B cell (primary cell): ENCODE measurements at regions of chr2 and their contacts with region 1.

Region 1: GRCh38 chr2:237674731-237675276 is 47.4 kb downstream of the LRRFIP1 start:
- DNase-seq: peak; percentile 97
- ATAC-seq: peak; percentile 78
- H3K4me3 ChIP-seq: peak overlapping the region; percentile 38 to 72 (median 54)
- H3K4me3 Mint-ChIP-seq: peak overlapping the region; percentile 92
- H3K27ac ChIP-seq: peak overlapping the region; percentile 97 to 99
- H3K27ac Mint-ChIP-seq: peak overlapping the region; percentile 96
- H3K4me1 ChIP-seq: peaks cover 75 to 88% of the 10 kb centered on the region in 2 donors
- H3K4me1 Mint-ChIP-seq: peaks cover 84% of the 10 kb centered on the region
- H3K27me3 ChIP-seq: no peaks in the 10 kb centered on the region
- H3K27me3 Mint-ChIP-seq: no peaks in the 10 kb centered on the region
- CTCF ChIP-seq: no peak

Region 2: DNA sequence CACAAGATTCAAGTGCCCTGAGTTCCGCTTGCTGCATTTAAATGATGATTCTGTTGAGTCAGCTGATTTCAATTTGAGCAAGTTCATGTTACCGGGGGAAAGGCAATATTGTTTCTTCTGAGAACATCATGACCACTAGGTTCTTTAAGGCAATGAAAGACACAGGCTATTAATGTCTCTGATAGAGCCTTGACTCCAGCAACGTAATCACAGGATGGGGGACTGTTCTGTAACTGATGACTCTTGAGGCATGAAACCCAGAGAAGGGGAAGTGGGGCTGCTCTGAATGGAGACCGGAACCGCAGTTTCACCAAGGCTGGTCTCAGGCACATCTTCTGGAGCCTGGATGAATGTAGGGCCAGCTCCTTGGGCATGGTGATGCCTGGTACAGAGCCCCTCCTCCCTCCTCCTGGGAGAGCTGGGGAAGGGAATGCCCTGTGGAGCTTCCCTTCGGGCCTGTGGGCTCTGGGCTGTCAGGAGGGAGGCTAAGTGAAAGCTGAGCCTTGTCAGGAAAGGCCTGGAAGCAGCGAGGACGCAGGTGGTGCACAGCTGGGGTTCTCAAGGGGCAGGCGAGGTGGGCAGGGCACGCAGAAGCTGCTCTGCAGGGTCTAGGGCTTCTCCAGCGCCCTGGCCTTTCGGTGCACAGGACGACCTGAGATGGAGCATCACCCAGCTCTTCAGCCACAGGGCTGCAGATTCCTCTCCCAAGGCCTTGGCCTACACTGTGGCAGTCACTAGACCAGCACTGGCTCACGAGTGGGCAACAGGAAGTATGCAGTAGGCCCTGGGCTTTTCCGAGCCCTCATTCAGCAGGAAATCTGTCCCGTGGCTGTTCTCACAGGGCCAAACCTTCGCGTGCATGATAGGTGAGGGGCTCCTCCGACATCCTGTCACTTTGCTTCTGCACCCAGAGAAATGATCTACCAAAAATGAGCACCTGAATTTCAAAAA is 145.1 kb before region 1 on chr2:
- CTCF ChIA-PET with region 1: no interaction called
- POLR2A ChIA-PET with region 1: no interaction called
- intact Hi-C with region 1: no loop called
- DNase-seq: peak; percentile 44
- ATAC-seq: peak; percentile 41
- H3K4me3 ChIP-seq: peak overlapping the region in 1 of 5 experiments; percentile 17
- H3K4me3 Mint-ChIP-seq: peak overlapping the region; percentile 32
- H3K27ac ChIP-seq: no peak overlapping the region
- H3K27ac Mint-ChIP-seq: no peak overlapping the region
- H3K4me1 ChIP-seq: peaks cover 0 to 9% of the 10 kb centered on the region in 2 donors
- H3K4me1 Mint-ChIP-seq: peaks cover 5% of the 10 kb centered on the region
- H3K27me3 ChIP-seq: no peaks in the 10 kb centered on the region
- H3K27me3 Mint-ChIP-seq: no peaks in the 10 kb centered on the region
- CTCF ChIP-seq: no peak

Region 3: DNA sequence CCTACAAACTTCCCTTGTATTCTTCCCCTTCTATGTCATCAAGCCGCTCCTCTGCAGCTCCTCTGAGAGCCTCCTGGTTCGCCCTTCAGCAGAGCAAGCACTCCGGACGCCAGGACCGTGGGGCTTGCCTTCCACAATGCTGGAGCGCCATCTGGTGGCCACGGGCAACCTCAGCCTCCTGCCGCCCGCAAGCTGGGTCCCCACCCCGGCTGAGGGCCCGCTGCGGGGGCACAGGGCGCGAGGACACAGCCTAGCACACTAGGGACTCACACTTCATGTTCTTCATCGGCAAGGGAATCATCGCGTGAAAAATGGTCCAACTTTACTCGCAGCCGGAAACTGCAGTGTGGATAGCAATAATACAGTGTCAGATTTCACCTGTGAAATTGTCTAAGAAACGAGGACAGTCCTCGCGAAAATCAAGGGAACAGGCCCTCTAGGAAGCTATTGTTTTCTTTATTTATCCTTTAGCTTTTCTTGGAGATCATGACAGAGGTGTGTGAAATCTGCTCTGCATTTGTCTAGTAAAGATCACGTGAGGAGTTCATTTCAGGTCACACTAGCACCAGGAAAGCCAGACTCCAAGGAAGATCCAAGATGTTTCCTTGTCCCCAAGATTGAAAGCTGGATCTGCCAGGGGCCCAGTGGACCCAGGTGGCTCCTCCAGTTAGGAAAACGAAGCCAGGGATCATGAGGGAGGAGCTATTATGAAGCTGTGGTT is 102.6 kb before region 1 on chr2:
- CTCF ChIA-PET with region 1: interaction called, 19 read pairs
- POLR2A ChIA-PET with region 1: no interaction called
- intact Hi-C with region 1: no loop called
- DNase-seq: peak; percentile 87
- ATAC-seq: peak; percentile 93
- H3K4me3 ChIP-seq: no peak overlapping the region
- H3K4me3 Mint-ChIP-seq: no peak overlapping the region
- H3K27ac ChIP-seq: no peak overlapping the region
- H3K27ac Mint-ChIP-seq: no peak overlapping the region
- H3K4me1 ChIP-seq: peaks cover 0 to 7% of the 10 kb centered on the region in 2 donors
- H3K4me1 Mint-ChIP-seq: peaks cover 6% of the 10 kb centered on the region
- H3K27me3 ChIP-seq: peaks cover 0 to 14% (median 2%) of the 10 kb centered on the region in 4 experiments
- H3K27me3 Mint-ChIP-seq: peaks cover 36% of the 10 kb centered on the region
- CTCF ChIP-seq: peak; percentile 98

Region 4: DNA sequence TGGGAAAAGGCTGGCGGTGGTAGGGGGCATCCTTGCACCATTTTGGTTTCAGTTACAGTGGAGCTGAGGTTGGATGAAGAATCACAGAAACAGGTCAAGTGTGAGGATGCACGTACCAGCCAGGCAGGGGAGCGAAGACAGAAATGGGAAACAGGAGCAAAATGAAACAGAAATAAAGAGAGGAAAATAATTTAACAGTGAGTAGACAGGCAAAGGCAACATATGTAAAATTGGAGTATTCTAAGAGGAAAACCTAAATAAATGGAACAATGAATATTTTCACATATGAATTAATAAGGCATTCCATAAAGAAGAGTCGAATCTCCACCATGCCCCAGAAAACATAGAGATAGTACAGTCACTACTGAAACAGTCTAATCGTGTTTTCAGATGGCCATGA is 17.7 kb before region 1 on chr2:
- CTCF ChIA-PET with region 1: interaction called, 4 read pairs
- POLR2A ChIA-PET with region 1: no interaction called
- intact Hi-C with region 1: loop called (anchors 2 kb)
- DNase-seq: no peak
- ATAC-seq: no peak
- H3K4me3 ChIP-seq: no peak overlapping the region
- H3K4me3 Mint-ChIP-seq: no peak overlapping the region
- H3K27ac ChIP-seq: no peak overlapping the region
- H3K27ac Mint-ChIP-seq: no peak overlapping the region
- H3K4me1 ChIP-seq: peaks cover 7 to 16% of the 10 kb centered on the region in 2 donors
- H3K4me1 Mint-ChIP-seq: peaks cover 30% of the 10 kb centered on the region
- H3K27me3 ChIP-seq: peaks cover 0 to 3% (median 1%) of the 10 kb centered on the region in 4 experiments
- H3K27me3 Mint-ChIP-seq: peaks cover 22% of the 10 kb centered on the region
- CTCF ChIP-seq: no peak

Region 5: GRCh38 chr2:237691908-237692600 is 17.2 kb after region 1 on chr2:
- CTCF ChIA-PET with region 1: interaction called, 350 read pairs
- POLR2A ChIA-PET with region 1: interaction called, 154 read pairs
- intact Hi-C with region 1: loop called (anchors 1 kb)
- DNase-seq: peak; percentile 94
- ATAC-seq: peak; percentile 66
- H3K4me3 ChIP-seq: peak overlapping the region; percentile 87 to 94 (median 92)
- H3K4me3 Mint-ChIP-seq: peak overlapping the region; percentile 91
- H3K27ac ChIP-seq: peak overlapping the region; percentile 94 to 95
- H3K27ac Mint-ChIP-seq: peak overlapping the region; percentile 87
- H3K4me1 ChIP-seq: peaks cover 70 to 79% of the 10 kb centered on the region in 2 donors
- H3K4me1 Mint-ChIP-seq: peaks cover 78% of the 10 kb centered on the region
- H3K27me3 ChIP-seq: no peaks in the 10 kb centered on the region
- H3K27me3 Mint-ChIP-seq: no peaks in the 10 kb centered on the region
- CTCF ChIP-seq: no peak

Region 6: GRCh38 chr2:237714690-237715458 is 40.1 kb after region 1 on chr2:
- CTCF ChIA-PET with region 1: interaction called, 24 read pairs
- POLR2A ChIA-PET with region 1: interaction called, 3 read pairs
- intact Hi-C with region 1: no loop called
- DNase-seq: no peak
- ATAC-seq: no peak
- H3K4me3 ChIP-seq: no peak overlapping the region
- H3K4me3 Mint-ChIP-seq: no peak overlapping the region
- H3K27ac ChIP-seq: peak overlapping the region in 1 of 2 donors; percentile 11
- H3K27ac Mint-ChIP-seq: peak overlapping the region; percentile 57
- H3K4me1 ChIP-seq: peaks cover 7 to 9% of the 10 kb centered on the region in 2 donors
- H3K4me1 Mint-ChIP-seq: peaks cover 43% of the 10 kb centered on the region
- H3K27me3 ChIP-seq: no peaks in the 10 kb centered on the region
- H3K27me3 Mint-ChIP-seq: no peaks in the 10 kb centered on the region
- CTCF ChIP-seq: no peak

Region 7: GRCh38 chr2:237744613-237745249 is 69.9 kb after region 1 on chr2:
- CTCF ChIA-PET with region 1: interaction called, 269 read pairs
- POLR2A ChIA-PET with region 1: interaction called, 9 read pairs
- intact Hi-C with region 1: loop called (anchors 1 kb)
- DNase-seq: peak; percentile 80
- ATAC-seq: peak; percentile 86
- H3K4me3 ChIP-seq: no peak overlapping the region
- H3K4me3 Mint-ChIP-seq: no peak overlapping the region
- H3K27ac ChIP-seq: peak overlapping the region in 1 of 2 donors; percentile 29
- H3K27ac Mint-ChIP-seq: peak overlapping the region; percentile 80
- H3K4me1 ChIP-seq: peaks cover 0 to 2% of the 10 kb centered on the region in 2 donors
- H3K4me1 Mint-ChIP-seq: peaks cover 40% of the 10 kb centered on the region
- H3K27me3 ChIP-seq: no peaks in the 10 kb centered on the region
- H3K27me3 Mint-ChIP-seq: no peaks in the 10 kb centered on the region
- CTCF ChIP-seq: peak; percentile 93

Region 8: GRCh38 chr2:238288650-238289573 is 614.1 kb after region 1 on chr2:
- CTCF ChIA-PET with region 1: no interaction called
- POLR2A ChIA-PET with region 1: no interaction called
- intact Hi-C with region 1: loop called (anchors 10 kb)
- DNase-seq: peak; percentile 99
- ATAC-seq: peak; percentile 88
- H3K4me3 ChIP-seq: peak overlapping the region; percentile 51 to 89 (median 87)
- H3K4me3 Mint-ChIP-seq: peak overlapping the region; percentile 97
- H3K27ac ChIP-seq: peak overlapping the region; percentile 76 to 93
- H3K27ac Mint-ChIP-seq: peak overlapping the region; percentile 98
- H3K4me1 ChIP-seq: peaks cover 17 to 28% of the 10 kb centered on the region in 2 donors
- H3K4me1 Mint-ChIP-seq: peaks cover 38% of the 10 kb centered on the region
- H3K27me3 ChIP-seq: peaks cover 0 to 2% (median 0%) of the 10 kb centered on the region in 4 experiments
- H3K27me3 Mint-ChIP-seq: no peaks in the 10 kb centered on the region
- CTCF ChIP-seq: peak; percentile 25